Activated CD8-positive, alpha-beta T cell treated with anti-CD3 and anti-CD28 coated beads, Interleukin-2, amount 10 ng/mL, durations not matched to agents 7 days and 5 days (primary cell): ENCODE measurements at regions of chr7 and their contacts with region 1.

Region 1: GRCh38 chr7:139645572-139646523 is 122.4 kb downstream of the CLEC2L start:
- DNase-seq: peak; percentile 88
- ATAC-seq: peak; percentile 67
- H3K4me3 Mint-ChIP-seq: no peak overlapping the region
- H3K27ac Mint-ChIP-seq: no peak overlapping the region
- H3K4me1 Mint-ChIP-seq: peaks cover 53% of the 10 kb centered on the region
- H3K27me3 Mint-ChIP-seq: no peaks in the 10 kb centered on the region

Region 2: GRCh38 chr7:139526578-139527544 is 119.0 kb before region 1 on chr7:
- CTCF ChIA-PET with region 1: no interaction called
- POLR2A ChIA-PET with region 1: no interaction called
- DNase-seq: no peak
- ATAC-seq: no peak
- H3K4me3 Mint-ChIP-seq: no peak overlapping the region
- H3K27ac Mint-ChIP-seq: no peak overlapping the region
- H3K4me1 Mint-ChIP-seq: no peaks in the 10 kb centered on the region
- H3K27me3 Mint-ChIP-seq: peaks cover 39% of the 10 kb centered on the region

Region 3: DNA sequence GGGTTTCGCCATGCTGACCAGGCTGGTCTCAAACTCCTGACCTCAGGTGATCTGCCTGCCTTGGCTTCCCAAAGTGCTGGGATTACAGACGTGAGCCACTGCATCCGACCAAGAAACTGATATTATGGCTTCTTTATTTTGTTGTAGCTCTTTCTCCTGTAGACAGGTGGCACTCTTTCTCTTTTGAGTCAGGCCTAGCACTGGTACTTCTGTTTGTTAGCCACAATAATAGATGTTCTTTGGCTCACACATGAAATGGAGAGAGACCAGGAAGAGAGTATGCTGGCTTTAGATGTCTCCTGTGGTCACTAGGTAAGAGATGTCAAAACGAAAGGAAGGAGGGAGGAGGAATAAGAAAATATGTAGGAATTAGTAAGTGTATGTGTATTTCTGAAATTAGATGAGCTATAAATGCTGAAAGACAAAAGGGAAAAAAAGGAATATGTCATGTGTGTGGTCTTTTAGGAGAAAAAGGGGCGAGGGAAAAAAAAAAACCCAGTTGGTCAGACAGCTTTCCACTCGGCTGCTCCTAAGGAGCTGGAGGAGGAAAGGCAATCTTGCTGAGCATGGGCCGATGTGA is 43.6 kb before region 1 on chr7:
- CTCF ChIA-PET with region 1: interaction called, 26 read pairs
- POLR2A ChIA-PET with region 1: no interaction called
- DNase-seq: peak; percentile 28
- ATAC-seq: peak; percentile 72
- H3K4me3 Mint-ChIP-seq: no peak overlapping the region
- H3K27ac Mint-ChIP-seq: no peak overlapping the region
- H3K4me1 Mint-ChIP-seq: no peaks in the 10 kb centered on the region
- H3K27me3 Mint-ChIP-seq: no peaks in the 10 kb centered on the region

Region 4: DNA sequence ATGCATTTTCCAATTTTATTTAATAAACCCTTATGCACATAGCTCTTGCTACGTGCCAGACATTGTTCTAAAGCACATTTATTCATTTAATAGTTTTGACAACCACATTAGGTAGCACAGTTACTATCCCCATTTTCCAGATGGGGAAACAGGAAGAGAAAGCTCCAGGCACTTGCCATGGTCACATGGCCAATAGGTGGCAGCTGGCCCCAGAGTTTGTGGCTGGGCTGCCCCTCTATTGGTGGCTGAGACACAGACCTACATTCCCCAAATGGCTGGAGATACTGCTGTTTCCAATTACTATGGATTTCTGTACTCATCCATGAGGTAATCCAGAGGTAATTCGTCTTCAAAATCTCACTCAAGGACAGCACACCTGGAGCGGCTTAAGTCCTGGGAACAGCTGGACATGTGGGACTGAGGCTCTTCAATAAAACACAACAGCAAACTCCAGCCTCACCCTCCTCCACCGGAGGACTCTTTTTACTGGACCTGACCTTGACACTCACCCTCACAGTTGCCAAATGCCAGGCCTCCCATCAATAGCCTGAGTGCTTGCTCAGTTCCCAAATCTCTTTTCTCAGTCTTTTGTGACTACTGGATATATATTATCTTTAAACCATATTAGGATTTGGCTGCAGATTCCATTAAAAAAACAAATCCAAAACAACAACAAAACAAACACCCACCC is 16.3 kb before region 1 on chr7:
- CTCF ChIA-PET with region 1: interaction called, 14 read pairs
- POLR2A ChIA-PET with region 1: interaction called, 3 read pairs
- DNase-seq: no peak
- ATAC-seq: no peak
- H3K4me3 Mint-ChIP-seq: no peak overlapping the region
- H3K27ac Mint-ChIP-seq: no peak overlapping the region
- H3K4me1 Mint-ChIP-seq: peaks cover 61% of the 10 kb centered on the region
- H3K27me3 Mint-ChIP-seq: no peaks in the 10 kb centered on the region

Region 5: GRCh38 chr7:139667377-139667776 is 21.5 kb after region 1 on chr7:
- CTCF ChIA-PET with region 1: interaction called, 34 read pairs
- POLR2A ChIA-PET with region 1: no interaction called
- DNase-seq: no peak
- ATAC-seq: no peak
- H3K4me3 Mint-ChIP-seq: no peak overlapping the region
- H3K27ac Mint-ChIP-seq: no peak overlapping the region
- H3K4me1 Mint-ChIP-seq: peaks cover 13% of the 10 kb centered on the region
- H3K27me3 Mint-ChIP-seq: no peaks in the 10 kb centered on the region

Region 6: GRCh38 chr7:139767561-139767982 is 121.7 kb after region 1 on chr7:
- CTCF ChIA-PET with region 1: interaction called, 42 read pairs
- POLR2A ChIA-PET with region 1: no interaction called
- DNase-seq: peak; percentile 51
- ATAC-seq: peak; percentile 74
- H3K4me3 Mint-ChIP-seq: peak overlapping the region; percentile 28
- H3K27ac Mint-ChIP-seq: peak overlapping the region; percentile 94
- H3K4me1 Mint-ChIP-seq: peaks cover 65% of the 10 kb centered on the region
- H3K27me3 Mint-ChIP-seq: no peaks in the 10 kb centered on the region

Region 7: DNA sequence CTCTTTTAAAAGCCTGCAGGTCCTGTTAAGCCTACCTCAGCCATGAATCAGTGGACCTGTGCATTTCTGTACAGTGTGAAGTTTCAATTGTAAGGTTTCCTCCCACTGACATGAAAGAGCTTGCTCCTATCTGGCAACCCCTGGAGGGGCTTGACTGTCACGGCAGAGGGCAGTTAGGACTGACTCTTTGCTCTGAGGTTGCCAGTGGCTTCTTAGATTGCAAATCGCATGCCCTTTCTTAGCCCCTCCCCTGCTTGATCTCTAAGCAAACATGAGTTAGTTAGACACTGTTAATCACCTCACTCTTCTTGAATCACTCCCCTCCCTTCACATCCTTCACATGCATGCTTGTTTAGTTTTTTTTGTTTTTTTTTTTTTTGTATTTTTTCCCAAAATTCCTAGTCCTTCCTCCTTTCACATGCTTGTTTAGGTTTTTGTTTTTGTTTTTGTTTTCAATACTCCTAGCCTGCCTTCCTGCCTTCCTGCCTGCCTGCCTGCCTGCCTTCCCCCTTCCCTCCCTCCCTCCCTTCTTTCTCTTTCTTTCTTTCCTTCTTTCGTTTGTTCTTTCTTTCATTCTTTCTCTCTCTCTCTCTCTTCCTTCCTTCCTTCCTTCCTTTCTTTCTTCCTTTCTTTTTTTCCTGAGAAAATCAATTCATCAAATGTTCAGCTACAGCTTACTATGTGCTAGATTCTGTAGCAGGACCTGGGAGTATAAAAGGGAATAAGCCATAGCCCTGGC is 138.0 kb after region 1 on chr7:
- CTCF ChIA-PET with region 1: interaction called, 24 read pairs
- POLR2A ChIA-PET with region 1: no interaction called
- DNase-seq: no peak
- ATAC-seq: no peak
- H3K4me3 Mint-ChIP-seq: no peak overlapping the region
- H3K27ac Mint-ChIP-seq: no peak overlapping the region
- H3K4me1 Mint-ChIP-seq: peaks cover 2% of the 10 kb centered on the region
- H3K27me3 Mint-ChIP-seq: peaks cover 16% of the 10 kb centered on the region

Region 8: GRCh38 chr7:139915864-139916716 is 270.2 kb after region 1 on chr7:
- CTCF ChIA-PET with region 1: interaction called, 11 read pairs
- POLR2A ChIA-PET with region 1: no interaction called
- DNase-seq: peak; percentile 62
- ATAC-seq: peak; percentile 91
- H3K4me3 Mint-ChIP-seq: no peak overlapping the region
- H3K27ac Mint-ChIP-seq: no peak overlapping the region
- H3K4me1 Mint-ChIP-seq: peaks cover 22% of the 10 kb centered on the region
- H3K27me3 Mint-ChIP-seq: peaks cover 2% of the 10 kb centered on the region